Activated CD4-positive, alpha-beta T cell treated with anti-CD3 and anti-CD28 coated beads, Interleukin-2, amount 10 ng/mL, durations not matched to agents 24 days and 14 days (primary cell): ENCODE measurements at regions of chr10 and their contacts with region 1.

Region 1: GRCh38 chr10:24642622-24643417 is 80.9 kb downstream of the ARHGAP21 start:
- DNase-seq: peak; percentile 79
- H3K4me3 Mint-ChIP-seq: no peak overlapping the region
- H3K27ac Mint-ChIP-seq: no peak overlapping the region
- H3K4me1 Mint-ChIP-seq: peaks cover 3% of the 10 kb centered on the region
- H3K27me3 Mint-ChIP-seq: no peaks in the 10 kb centered on the region

Region 2: DNA sequence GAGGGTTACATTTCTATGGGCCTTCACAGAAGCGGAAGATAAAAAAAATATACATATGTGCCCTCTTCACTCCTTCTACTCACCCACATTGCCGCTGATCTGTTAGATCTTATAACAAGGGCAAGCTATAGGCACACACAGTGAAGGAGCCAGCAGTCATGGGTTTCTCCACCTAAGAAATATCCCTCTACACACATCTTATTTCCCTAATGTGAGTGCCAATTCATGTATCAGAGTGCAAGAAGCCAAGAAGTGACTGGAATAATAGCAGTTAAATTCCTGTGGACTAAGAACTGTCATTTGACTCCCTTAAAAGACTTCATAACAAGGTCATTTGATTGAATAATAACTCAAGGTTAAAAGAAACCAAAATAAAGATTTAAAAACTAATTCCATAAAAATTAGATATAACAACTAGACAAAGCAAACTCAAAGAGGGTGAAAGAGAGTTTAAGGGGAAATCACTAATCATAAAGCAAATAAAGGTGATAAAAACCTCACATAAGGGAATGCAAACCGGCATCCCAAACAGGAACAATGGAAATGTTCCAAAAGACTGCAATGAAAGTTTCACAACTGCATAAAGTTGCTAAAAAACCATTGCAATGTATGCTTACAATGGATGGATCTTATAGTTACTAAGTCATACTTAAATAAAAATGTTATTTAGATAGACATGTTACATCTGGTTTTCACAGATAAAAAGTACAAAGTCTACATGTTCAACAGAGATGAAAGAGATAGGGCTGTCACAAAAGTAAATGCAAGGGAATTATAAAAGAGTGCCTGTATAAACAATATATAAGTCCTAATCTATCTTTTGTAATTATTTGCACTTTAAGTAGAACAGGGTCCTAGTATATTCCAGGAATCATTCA is 38.1 kb after region 1 on chr10:
- intact Hi-C with region 1: no loop called
- DNase-seq: no peak
- H3K4me3 Mint-ChIP-seq: no peak overlapping the region
- H3K27ac Mint-ChIP-seq: no peak overlapping the region
- H3K4me1 Mint-ChIP-seq: peaks cover 4% of the 10 kb centered on the region
- H3K27me3 Mint-ChIP-seq: no peaks in the 10 kb centered on the region

Region 3: GRCh38 chr10:24706479-24707118 is 63.8 kb after region 1 on chr10:
- intact Hi-C with region 1: loop called (anchors 5 kb)
- DNase-seq: peak; percentile 78
- H3K4me3 Mint-ChIP-seq: no peak overlapping the region
- H3K27ac Mint-ChIP-seq: no peak overlapping the region
- H3K4me1 Mint-ChIP-seq: peaks cover 22% of the 10 kb centered on the region
- H3K27me3 Mint-ChIP-seq: no peaks in the 10 kb centered on the region

Region 4: GRCh38 chr10:24952707-24953645 is 310.2 kb after region 1 on chr10:
- intact Hi-C with region 1: loop called (anchors 5 kb)
- DNase-seq: peak; percentile 85
- H3K4me3 Mint-ChIP-seq: peak overlapping the region; percentile 78
- H3K27ac Mint-ChIP-seq: peak overlapping the region; percentile 82
- H3K4me1 Mint-ChIP-seq: peaks cover 21% of the 10 kb centered on the region
- H3K27me3 Mint-ChIP-seq: peaks cover 2% of the 10 kb centered on the region

Region 5: DNA sequence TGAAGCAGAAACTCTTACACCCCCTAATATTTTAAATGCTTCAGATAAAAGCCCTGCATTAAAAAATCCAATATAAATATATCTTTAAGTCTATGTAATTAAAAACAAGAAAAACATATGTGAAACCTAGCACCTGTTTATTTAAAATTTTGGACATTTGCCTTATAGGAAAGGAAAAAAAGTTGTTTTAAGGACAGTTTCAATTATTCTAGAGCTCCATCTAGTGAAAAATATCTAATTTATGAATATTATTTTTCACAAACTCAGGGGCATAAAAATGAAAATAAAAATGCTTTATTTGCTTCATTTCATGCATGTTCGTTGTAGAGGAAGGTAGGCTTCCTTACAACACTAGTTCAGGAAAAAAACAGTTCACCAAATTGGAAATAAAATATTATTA is 347.0 kb after region 1 on chr10:
- intact Hi-C with region 1: loop called (anchors 1 kb)
- DNase-seq: no peak
- H3K4me3 Mint-ChIP-seq: no peak overlapping the region
- H3K27ac Mint-ChIP-seq: no peak overlapping the region
- H3K4me1 Mint-ChIP-seq: peaks cover 3% of the 10 kb centered on the region
- H3K27me3 Mint-ChIP-seq: peaks cover 10% of the 10 kb centered on the region

Region 6: GRCh38 chr10:25080880-25081581 is 438.2 kb after region 1 on chr10:
- intact Hi-C with region 1: loop called (anchors 1 kb)
- DNase-seq: peak; percentile 89
- H3K4me3 Mint-ChIP-seq: no peak overlapping the region
- H3K27ac Mint-ChIP-seq: no peak overlapping the region
- H3K4me1 Mint-ChIP-seq: peaks cover 11% of the 10 kb centered on the region
- H3K27me3 Mint-ChIP-seq: peaks cover 18% of the 10 kb centered on the region